ENCODE measurements at regions of chr3 and their contacts with region 1.

Region 1: GRCh38 chr3:65732051-65732935 is 306.4 kb downstream of the MAGI1 start:
- DNase-seq: peak; percentile 71
- H3K4me3 ChIP-seq: peak overlapping the region in 1 of 2 experiments; percentile 37; a peak in 1 of 4 replicates
- H3K27ac ChIP-seq: peak overlapping the region in 1 of 2 experiments; percentile 41; a peak in 1 of 4 replicates
- H3K4me1 ChIP-seq: peaks cover 11% of the 10 kb centered on the region in 2 experiments
- H3K27me3 ChIP-seq: no peaks in the 10 kb centered on the region
- CTCF ChIP-seq: peak; percentile 85
- EP300 ChIP-seq: no peak
- RAD21 ChIP-seq: peak; percentile 88

Region 2: GRCh38 chr3:65597226-65597951 is 134.9 kb before region 1 on chr3:
- CTCF ChIA-PET with region 1: interaction called, 13 read pairs
- POLR2A ChIA-PET with region 1: interaction called, 3 read pairs
- DNase-seq: peak; percentile 87
- H3K4me3 ChIP-seq: peak overlapping the region; percentile 55 to 58
- H3K27ac ChIP-seq: peak overlapping the region in 1 of 2 experiments; percentile 94; a peak in 2 of 4 replicates
- H3K4me1 ChIP-seq: peaks cover 0 to 17% of the 10 kb centered on the region in 2 experiments; a peak in 2 of 4 replicates
- H3K27me3 ChIP-seq: no peaks in the 10 kb centered on the region
- CTCF ChIP-seq: no peak
- EP300 ChIP-seq: peak in 1 of 2 experiments; percentile 42; a peak in 2 of 4 replicates
- RAD21 ChIP-seq: peak; percentile 27; the same call in 1 of the 2 replicates

Measured in SK-N-SH (cell line).